Posterior cingulate gyrus (tissue), 11 donors: ENCODE measurements at regions of chr4 and their contacts with region 1.

Region 1: DNA sequence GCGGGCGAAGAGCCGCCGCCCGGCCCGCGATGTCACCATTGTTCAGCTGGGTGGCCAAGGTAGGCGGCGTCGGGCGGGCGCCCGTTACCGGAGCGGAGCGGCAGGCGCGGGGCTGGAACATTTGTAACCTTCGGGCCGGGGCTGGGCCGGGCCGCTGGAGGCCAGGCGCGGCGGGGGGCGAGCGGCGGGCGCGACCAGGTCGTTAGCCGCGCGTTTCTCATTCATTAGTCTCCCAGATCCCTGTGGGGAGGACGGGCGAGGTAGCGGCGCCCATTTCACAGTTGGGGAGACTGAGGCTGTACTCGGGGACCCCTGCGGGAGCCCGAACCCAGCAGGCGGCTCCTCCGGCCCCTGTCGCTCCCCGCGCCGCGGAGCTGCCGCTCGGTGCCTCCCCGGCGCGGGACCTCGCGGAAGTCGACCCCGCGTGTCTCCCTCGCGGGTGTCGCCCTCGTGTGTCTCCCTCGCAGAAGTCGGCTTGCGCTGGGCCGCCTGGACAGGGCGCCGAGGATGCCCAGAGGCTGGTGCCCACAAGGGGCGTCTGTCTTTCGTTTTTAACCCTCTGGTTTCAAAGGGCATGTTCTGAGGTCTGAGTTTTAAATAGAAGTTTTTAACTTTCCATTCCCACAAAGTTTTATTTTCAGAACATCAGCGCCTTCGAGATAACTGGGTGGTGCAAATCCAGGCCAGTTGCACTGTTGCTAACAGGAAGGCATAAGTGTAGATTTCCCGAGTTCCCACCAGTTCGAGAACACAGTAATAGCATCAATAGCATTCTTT is 17.5 kb downstream of the PTTG2 start:
- DNase-seq: peak; percentile 36 to 96 (median 70)

Region 2: DNA sequence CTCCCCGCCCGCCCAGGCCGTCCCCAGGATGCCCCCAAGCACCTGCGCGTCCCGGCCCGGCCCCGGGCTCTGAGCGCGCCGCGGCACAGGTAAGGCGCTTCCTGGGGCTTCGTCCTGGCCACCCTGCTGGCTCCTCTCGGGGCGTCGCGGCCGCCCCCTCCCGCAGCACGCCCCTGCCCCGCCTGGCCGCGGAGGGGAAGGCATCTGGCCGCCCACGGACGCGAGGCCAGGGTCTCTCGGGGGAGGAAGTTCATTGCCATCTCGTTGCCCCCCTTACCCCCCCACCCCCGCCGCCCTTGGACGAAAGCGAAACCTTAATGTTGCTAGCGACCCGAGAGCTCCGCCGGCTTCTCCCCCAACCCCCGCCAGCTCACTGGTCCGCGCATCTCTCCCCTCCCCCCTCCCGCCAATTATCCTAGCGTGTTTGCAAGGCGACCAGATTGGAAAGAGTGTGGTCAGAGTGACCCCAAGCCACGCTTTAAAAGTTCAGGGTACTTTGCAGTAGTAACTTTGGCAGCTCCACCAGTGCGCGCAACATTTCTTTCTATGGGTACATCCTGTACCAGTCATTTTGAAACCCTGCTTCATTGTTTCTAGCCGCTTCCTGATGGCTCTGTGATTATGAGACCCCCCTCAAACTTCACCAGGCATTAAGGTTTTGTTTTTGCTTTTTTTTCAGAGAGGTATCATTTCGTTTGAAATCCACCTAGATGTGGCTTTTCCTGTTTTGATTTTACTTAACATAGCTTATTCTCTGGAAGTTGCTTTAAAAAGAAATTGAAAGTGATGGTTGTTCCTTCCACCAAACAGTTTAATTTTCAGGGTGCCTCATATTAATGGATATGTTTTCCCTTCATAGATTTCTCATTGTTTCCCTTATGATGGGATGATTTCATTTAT is 86.1 kb before region 1 on chr4:
- intact Hi-C with region 1: loop called (anchors 5 kb)
- DNase-seq: peak in 2 of 10 donors; percentile 12 to 49

Region 3: DNA sequence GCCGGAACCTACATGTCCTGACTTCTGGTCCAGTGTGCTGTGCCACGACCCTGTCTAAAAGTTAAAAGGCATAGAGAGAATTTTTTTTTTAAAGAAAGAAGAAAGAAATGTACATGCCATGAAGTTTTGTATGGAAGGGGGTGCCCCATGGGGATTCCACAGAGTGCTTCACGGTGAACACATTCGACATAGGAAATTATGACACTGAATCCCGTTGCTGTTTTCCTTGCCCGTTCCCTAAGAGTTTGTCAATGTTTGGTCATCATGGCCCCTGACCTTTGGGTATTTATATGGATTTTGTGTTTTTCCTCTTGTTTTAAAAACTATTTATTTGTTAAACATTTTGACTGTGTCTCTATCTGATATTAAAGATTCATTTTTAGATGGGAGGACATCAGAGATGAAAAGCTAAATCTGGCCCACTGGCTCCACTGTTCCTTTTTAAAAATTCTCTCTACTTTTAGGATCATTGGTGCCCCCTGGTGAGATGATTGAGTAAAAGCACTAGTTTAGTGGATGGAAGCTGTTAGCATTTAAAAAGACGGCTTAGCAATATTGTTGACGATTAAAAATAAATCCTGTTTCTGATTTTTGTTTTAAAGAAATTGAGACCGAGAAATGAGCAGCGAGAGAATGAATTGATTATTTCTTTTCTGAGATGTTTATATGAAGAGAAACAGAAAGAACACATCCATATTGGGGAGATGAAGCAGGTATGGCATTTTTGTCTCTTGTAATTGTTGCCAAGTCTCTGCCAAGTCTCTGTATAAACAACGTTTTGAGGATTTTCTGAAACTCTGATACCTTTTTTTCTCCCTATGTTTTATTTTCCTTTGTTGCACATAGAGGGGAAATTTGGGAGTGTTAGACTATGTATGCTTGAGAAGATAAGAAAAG is 57.6 kb after region 1 on chr4:
- intact Hi-C with region 1: loop called (anchors 10 kb)
- DNase-seq: no peak